ENCODE measurements at regions of chr1 and their contacts with region 1.

Region 1: DNA sequence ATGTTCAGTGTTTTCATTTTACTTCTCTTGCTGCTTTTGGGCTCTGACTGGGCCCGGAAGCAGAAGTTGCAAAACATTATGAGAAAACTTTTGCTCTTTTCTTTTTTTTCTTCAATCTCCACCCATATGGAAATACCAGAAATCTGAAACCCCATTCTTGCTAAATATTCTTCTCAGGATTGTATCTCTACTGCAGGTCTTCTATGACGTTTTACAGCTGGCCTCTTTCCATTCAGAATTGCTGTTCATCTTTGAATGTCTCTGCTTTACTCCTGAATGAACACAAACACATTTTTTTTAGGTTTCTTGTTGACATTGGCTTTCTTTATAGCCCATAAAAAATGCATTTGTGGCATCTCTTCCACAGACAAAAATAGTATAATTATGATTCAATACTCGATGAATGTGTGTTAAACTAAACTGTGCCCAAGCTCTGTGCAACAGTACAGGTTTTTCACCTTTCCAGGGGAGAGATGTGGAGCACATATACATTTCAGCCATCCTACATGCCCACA is 18.8 kb downstream of the PTPRC start:
- DNase-seq: no peak
- H3K4me3 Mint-ChIP-seq: peak overlapping the region; percentile 74
- H3K27ac Mint-ChIP-seq: peak overlapping the region; percentile 97
- H3K4me1 Mint-ChIP-seq: peaks cover 65% of the 10 kb centered on the region
- H3K27me3 Mint-ChIP-seq: no peaks in the 10 kb centered on the region

Region 2: DNA sequence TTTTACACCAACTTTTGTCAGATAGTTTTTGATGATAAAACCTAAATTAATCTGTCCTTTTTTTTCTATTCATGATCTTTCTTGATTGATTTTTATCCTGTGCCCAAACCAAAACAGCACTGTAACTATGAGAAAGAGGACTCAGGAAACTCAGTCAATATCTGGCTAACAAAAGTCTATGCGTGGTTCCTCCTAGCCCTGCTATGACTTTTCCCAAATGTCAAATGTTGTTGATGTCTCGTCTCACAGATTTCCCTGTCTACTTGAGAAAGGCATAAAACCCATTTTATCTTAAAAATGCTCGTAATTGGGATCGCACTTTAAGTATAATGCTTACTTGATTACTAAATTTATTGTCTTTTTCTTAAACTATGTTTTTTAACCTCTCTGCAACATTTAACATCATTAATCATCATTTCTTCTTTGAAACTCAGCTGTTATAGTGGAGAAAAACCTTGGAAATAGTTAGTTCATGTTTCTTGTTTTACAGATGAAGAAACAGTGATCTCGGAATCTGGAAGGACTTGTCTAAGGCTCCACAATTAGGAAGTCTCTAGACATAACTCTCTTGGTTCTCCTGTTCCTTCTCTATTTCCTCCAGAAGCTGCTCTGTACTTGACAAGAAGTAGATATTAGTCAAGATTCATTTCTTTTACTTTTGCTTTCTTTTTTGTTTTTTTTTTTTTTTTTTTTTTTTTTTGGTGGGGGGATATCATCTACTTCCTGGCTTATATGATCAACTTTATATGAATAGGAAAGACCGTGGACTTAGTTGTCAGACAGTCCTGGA is 44.9 kb before region 1 on chr1:
- CTCF ChIA-PET with region 1: no interaction called
- POLR2A ChIA-PET with region 1: interaction called, 16 read pairs
- intact Hi-C with region 1: no loop called
- DNase-seq: no peak
- H3K4me3 Mint-ChIP-seq: peak overlapping the region; percentile 79
- H3K27ac Mint-ChIP-seq: peak overlapping the region; percentile 97
- H3K4me1 Mint-ChIP-seq: peaks cover 71% of the 10 kb centered on the region
- H3K27me3 Mint-ChIP-seq: no peaks in the 10 kb centered on the region

Region 3: DNA sequence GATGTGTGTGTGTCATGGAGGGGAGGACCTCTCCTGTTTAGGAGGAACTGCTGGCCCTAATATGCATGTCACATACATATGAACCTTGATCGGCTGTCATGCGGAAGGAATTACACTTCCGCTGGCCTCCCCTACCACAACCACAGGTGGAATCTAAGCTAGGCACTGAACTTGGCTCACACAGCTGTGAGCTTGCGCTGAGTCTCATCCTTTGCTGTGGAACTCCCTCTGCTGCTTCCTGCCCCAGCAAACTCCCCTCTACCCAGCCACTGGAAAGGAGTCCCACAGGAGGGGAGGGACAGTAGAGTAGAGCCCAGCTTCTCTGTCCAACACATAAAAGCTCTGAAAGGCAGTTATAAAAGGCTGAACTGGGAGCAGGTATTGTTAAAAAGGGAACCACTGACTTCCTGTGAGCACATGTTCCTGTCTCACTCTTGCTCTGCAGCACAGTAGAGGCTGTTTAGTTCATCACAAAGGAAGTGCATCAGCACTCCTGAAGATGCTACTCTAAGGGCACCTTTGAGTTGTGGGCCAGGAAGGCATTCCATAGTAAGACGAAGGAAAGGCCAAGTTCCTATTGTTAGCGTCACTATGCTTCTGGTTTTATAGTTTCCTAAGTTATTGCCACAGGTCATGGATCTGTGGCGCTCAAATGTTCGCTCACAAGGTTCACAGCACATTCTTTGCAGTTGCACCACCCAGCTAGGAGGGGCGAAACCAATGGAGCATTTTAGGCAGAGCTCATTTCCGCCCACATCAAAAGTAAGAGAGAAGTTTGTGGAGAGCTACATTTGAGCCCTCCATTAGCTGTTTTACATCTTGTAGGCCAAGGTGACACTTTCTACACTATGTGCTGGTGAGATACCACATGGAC is 36.4 kb before region 1 on chr1:
- CTCF ChIA-PET with region 1: no interaction called
- POLR2A ChIA-PET with region 1: interaction called, 3 read pairs
- intact Hi-C with region 1: loop called (anchors 2 kb)
- DNase-seq: peak; percentile 84
- H3K4me3 Mint-ChIP-seq: peak overlapping the region; percentile 74
- H3K27ac Mint-ChIP-seq: peak overlapping the region; percentile 94
- H3K4me1 Mint-ChIP-seq: peaks cover 87% of the 10 kb centered on the region
- H3K27me3 Mint-ChIP-seq: no peaks in the 10 kb centered on the region

Region 4: DNA sequence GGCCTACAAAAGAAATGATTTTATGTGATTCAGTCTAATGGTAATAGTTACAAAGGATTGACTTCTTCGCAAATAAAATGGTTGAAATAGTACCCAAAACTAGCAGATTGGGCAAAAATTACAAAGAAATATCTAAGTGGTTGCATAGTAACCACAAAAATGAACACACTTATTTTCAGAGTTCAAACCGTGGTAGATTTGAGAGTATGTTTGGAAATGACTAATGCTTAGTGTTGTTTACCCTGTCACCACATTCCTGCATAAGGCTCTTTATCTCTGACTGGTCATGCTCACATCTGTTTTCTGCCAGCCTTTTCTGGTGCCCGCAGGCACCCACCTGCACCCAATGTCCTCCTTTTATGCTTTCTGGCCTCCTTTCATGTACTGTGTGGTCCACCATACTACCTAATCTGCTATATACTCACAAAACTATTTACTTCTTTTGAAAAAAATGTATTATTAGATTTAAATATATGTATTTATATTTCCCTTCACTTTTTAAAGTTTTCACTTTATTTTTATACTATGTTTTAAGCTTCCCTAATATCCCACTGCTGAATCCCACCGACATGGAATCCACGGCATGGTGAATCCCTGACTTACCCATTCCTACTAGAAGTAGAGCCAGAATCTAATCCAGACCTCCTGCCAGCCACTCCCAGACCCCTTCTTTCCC is 11.6 kb after region 1 on chr1:
- CTCF ChIA-PET with region 1: no interaction called
- POLR2A ChIA-PET with region 1: interaction called, 7 read pairs
- intact Hi-C with region 1: loop called (anchors 1 kb)
- DNase-seq: peak; percentile 65
- H3K4me3 Mint-ChIP-seq: peak overlapping the region; percentile 63
- H3K27ac Mint-ChIP-seq: peak overlapping the region; percentile 96
- H3K4me1 Mint-ChIP-seq: peaks cover 92% of the 10 kb centered on the region
- H3K27me3 Mint-ChIP-seq: no peaks in the 10 kb centered on the region

Region 5: DNA sequence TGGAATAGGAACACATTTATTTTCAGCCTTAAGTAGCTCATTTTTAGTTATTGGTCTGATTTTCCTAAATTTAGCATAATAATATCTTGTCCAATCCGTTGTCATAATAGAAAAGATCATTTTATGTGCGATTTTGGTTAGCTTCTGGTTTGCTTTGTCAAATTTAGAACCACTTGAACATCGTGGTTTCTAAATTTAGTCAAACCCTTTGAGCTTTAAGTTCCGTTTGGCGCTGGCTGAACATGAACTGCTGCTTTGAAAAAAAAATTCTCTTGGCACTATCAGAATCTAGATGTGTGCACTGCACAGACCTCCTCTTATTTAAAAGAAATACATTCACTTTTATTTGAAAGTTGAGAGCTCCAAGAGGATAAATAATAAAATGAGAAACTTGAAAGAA is 351.8 kb after region 1 on chr1:
- CTCF ChIA-PET with region 1: no interaction called
- POLR2A ChIA-PET with region 1: no interaction called
- intact Hi-C with region 1: no loop called
- DNase-seq: peak; percentile 13
- H3K4me3 Mint-ChIP-seq: no peak overlapping the region
- H3K27ac Mint-ChIP-seq: peak overlapping the region; percentile 31
- H3K4me1 Mint-ChIP-seq: peaks cover 7% of the 10 kb centered on the region
- H3K27me3 Mint-ChIP-seq: no peaks in the 10 kb centered on the region

Region 6: DNA sequence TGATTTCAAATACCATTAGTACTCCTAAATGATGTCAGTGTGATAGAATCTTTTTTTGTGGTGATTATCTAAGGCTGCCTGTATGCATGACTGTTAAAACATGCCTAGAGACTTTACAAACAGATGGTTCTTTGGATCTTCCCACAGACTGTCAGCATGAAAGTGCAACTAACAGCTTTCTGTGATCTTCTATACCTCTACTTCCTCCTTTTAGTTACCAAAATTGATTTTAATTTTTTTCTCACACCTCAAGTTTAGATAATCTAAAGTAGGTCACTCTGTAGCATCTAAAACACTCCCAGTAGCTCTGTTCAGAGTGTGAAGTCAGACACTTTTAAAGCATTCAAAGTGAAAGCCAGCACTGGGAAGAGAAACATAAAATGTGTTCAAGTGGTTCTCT is 515.7 kb after region 1 on chr1:
- CTCF ChIA-PET with region 1: no interaction called
- POLR2A ChIA-PET with region 1: no interaction called
- intact Hi-C with region 1: loop called (anchors 5 kb)
- DNase-seq: no peak
- H3K4me3 Mint-ChIP-seq: no peak overlapping the region
- H3K27ac Mint-ChIP-seq: no peak overlapping the region
- H3K4me1 Mint-ChIP-seq: peaks cover 49% of the 10 kb centered on the region
- H3K27me3 Mint-ChIP-seq: no peaks in the 10 kb centered on the region

Measured in activated CD4-positive, alpha-beta memory T cell treated with anti-CD3 and anti-CD28 coated beads for 36 hours (primary cell).